Activated CD8-positive, alpha-beta T cell treated with anti-CD3 and anti-CD28 coated beads for 36 hours (primary cell): ENCODE measurements at regions of chr6 and their contacts with region 1.

Region 1: DNA sequence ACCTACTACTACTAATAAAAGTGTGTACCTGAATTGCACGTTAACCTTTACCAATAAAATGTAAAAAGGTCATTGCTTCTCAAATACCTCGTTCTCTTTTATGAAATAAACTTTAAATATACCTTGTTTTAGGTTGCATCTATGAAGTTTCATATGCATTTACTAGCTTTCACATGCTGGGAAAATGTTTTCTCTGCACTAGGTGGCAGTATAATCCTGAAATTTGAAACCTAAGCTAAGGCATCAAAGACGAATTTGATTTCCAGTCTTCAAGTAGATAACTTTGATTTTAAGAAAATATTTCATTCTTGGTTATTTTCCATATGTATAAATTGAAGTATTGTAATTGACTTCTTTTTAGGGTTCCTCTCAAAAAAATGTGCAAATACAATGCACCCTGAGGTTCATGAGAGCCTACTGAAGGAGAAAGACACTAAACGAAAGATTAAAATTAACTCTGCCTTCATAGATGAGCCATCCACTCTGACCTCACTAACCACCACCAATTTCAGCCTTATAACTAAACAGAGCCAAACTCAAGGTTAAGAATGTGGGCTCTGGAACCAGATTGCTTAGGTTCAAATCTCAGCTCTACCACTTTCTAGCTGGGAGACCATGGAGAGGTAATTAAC is 7.3 kb upstream of the COL9A1 start:
- DNase-seq: no peak
- ATAC-seq: no peak
- H3K4me3 Mint-ChIP-seq: no peak overlapping the region
- H3K27ac Mint-ChIP-seq: no peak overlapping the region
- H3K4me1 Mint-ChIP-seq: peaks cover 7% of the 10 kb centered on the region
- H3K27me3 Mint-ChIP-seq: peaks cover 22% of the 10 kb centered on the region
- CTCF ChIP-seq: peak; percentile 42

Region 2: DNA sequence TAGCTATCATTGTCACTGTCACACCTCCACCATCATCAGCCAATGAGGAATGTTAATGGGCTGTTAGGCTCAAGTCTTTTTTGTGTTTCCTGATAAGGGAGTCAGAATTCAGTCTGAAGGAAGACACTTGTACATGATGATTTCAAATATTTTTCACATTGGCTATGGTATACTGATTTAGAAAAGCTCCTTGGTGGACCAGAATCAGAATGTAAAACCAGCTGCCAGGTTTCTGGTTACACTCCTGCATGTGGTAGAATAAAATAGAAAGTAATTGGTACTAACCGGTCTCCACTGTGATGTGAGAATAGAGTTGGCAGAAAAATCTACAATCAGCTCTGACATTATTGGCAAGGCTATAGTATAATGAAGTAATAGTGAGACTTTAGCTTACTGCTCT is 18.0 kb before region 1 on chr6:
- CTCF ChIA-PET with region 1: interaction called, 10 read pairs
- POLR2A ChIA-PET with region 1: no interaction called
- intact Hi-C with region 1: no loop called
- DNase-seq: no peak
- ATAC-seq: no peak
- H3K4me3 Mint-ChIP-seq: no peak overlapping the region
- H3K27ac Mint-ChIP-seq: no peak overlapping the region
- H3K4me1 Mint-ChIP-seq: no peaks in the 10 kb centered on the region
- H3K27me3 Mint-ChIP-seq: peaks cover 3% of the 10 kb centered on the region
- CTCF ChIP-seq: no peak

Region 3: GRCh38 chr6:70375882-70376281 is 65.7 kb after region 1 on chr6:
- CTCF ChIA-PET with region 1: interaction called, 202 read pairs
- POLR2A ChIA-PET with region 1: no interaction called
- intact Hi-C with region 1: no loop called
- DNase-seq: no peak
- ATAC-seq: no peak
- H3K4me3 Mint-ChIP-seq: no peak overlapping the region
- H3K27ac Mint-ChIP-seq: no peak overlapping the region
- H3K4me1 Mint-ChIP-seq: no peaks in the 10 kb centered on the region
- H3K27me3 Mint-ChIP-seq: peaks cover 11% of the 10 kb centered on the region
- CTCF ChIP-seq: no peak

Region 4: GRCh38 chr6:70390067-70390466 is 79.9 kb after region 1 on chr6:
- CTCF ChIA-PET with region 1: interaction called, 13 read pairs
- POLR2A ChIA-PET with region 1: no interaction called
- intact Hi-C with region 1: no loop called
- DNase-seq: no peak
- ATAC-seq: no peak
- H3K4me3 Mint-ChIP-seq: no peak overlapping the region
- H3K27ac Mint-ChIP-seq: no peak overlapping the region
- H3K4me1 Mint-ChIP-seq: no peaks in the 10 kb centered on the region
- H3K27me3 Mint-ChIP-seq: peaks cover 8% of the 10 kb centered on the region
- CTCF ChIP-seq: no peak